ENCODE measurements at regions of chr5 and their contacts with region 1.

Region 1: DNA sequence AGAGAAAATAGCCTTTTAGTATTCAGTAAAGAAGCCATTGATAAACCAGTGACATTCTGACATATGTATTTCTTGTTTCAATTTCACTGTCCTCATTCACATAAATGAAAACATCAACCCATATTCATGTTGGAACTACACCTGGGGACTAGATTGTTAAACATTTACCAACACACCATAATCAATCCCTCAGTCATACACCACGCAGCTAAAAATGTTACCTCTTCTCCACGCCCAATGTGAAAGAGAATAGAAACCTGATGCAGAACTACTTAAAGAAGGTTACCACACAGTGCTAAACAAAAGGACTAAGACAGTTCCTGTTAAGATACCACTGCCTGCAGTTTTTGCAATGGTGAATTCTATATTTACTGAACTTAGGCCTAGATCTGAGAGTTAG is 518.9 kb downstream of the PRELID2 start:
- DNase-seq: no peak
- ATAC-seq: no peak

Region 2: GRCh38 chr5:145260670-145261069 is 55.6 kb before region 1 on chr5:
- intact Hi-C with region 1: loop called (anchors 2 kb)
- DNase-seq: no peak
- ATAC-seq: no peak

Region 3: DNA sequence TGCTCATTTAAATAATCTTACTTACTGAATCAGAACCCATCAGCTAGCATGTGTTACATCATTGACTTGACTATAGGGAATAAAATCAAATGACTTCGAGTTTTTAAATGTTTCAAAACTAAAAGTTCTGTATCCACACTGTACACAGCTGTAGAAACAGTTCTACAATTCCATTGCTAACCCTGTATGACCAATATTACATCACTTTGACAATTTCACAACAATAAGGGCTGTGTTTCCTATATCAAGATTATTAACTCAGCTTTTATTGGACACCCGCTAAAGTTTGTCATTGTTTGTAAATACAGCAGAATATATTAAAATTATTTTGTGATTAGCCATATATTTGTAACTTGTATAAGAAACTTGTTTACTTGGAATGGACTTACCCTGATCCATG is 22.0 kb before region 1 on chr5:
- intact Hi-C with region 1: no loop called
- DNase-seq: no peak
- ATAC-seq: peak; percentile 80

Region 4: GRCh38 chr5:145834917-145835847 is 518.9 kb after region 1 on chr5 and contains the start of gene PRELID2:
- intact Hi-C with region 1: no loop called
- DNase-seq: peak; percentile 94
- ATAC-seq: peak; percentile 96
- total RNA-seq, gene PRELID2: 22.4 TPM